Gastrocnemius medialis (tissue), 4 donors: ENCODE measurements at regions of chr16 and their contacts with region 1.

Region 1: DNA sequence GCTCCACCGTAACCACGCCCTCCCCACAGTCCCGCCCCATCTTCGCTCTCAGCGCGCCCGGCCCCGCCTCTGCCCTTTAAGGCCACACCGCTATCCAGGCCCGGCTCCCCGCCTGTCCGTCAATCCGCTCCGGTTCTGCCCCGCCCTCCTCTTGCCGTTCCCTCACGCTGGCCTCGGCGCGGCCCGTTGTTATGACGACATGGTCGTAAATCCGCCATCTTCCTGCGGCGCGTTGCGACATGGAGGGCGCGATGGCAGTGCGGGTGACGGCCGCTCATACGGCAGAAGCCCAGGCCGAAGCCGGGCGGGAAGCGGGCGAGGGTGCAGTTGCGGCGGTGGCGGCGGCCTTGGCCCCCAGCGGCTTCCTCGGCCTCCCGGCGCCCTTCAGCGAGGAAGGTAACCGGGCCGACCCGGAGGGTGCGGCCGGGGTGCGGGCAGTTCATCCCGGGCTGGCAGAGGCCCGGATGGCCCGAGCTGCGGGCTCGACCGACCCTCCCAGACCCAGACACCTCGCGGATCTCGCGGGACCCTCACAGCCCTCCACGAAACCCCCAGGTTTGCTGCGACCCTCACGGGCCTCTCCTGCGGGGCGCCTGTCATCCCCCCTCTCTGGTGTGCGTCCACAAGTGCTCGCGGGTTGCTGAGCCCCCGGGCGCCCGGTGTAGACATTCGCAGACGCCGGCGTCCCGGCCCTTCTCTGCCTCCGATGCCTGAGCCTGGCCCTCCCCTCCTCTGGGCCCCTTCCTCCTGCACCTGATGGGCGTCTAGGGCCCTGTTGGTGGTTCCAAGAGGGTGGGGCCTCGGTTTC is at the start of gene E4F1:
- DNase-seq: peak; percentile 99 to 100
- ATAC-seq: peak; percentile 97
- H3K4me3 ChIP-seq: peak within 1 kb of the TSS; percentile 78 to 98 (median 93)
- H3K27ac ChIP-seq: peak within 1 kb of the TSS; percentile 85 to 96 (median 94)
- H3K4me1 ChIP-seq: peaks cover 11 to 16% of the 10 kb centered on the region in 2 donors
- H3K27me3 ChIP-seq: no peaks in the 10 kb centered on the region
- CTCF ChIP-seq: no peak
- POLR2A ChIP-seq: peak; percentile 97 to 98
- total RNA-seq, gene E4F1: 24.5 to 38.4 (median 27.0) TPM

Region 2: GRCh38 chr16:2190659-2191445 is 32.7 kb before region 1 on chr16:
- in situ Hi-C with region 1: no loop called
- intact Hi-C with region 1: no loop called
- DNase-seq: no peak
- ATAC-seq: no peak
- H3K4me3 ChIP-seq: no peak overlapping the region
- H3K27ac ChIP-seq: no peak overlapping the region
- H3K4me1 ChIP-seq: peaks cover 7 to 9% of the 10 kb centered on the region in 2 donors
- H3K27me3 ChIP-seq: peaks cover 18 to 23% (median 23%) of the 10 kb centered on the region in 3 donors
- CTCF ChIP-seq: no peak
- POLR2A ChIP-seq: no peak

Region 3: GRCh38 chr16:2205104-2205966 is 18.2 kb before region 1 on chr16 and contains the start of gene MLST8:
- in situ Hi-C with region 1: no loop called
- intact Hi-C with region 1: loop called (anchors 1 kb)
- DNase-seq: peak; percentile 70 to 78
- ATAC-seq: peak; percentile 87 to 91
- H3K4me3 ChIP-seq: peak within 1 kb of the TSS; percentile 82 to 94 (median 92)
- H3K27ac ChIP-seq: peak within 1 kb of the TSS; percentile 96 to 100 (median 100)
- H3K4me1 ChIP-seq: peaks cover 19 to 20% of the 10 kb centered on the region in 2 donors
- H3K27me3 ChIP-seq: no peaks in the 10 kb centered on the region
- CTCF ChIP-seq: peak in 1 of 5 experiments; percentile 42
- POLR2A ChIP-seq: peak; percentile 73 to 80
- total RNA-seq, gene MLST8: 40.3 to 77.0 (median 73.5) TPM

Region 4: GRCh38 chr16:2244245-2244691 is 20.7 kb after region 1 on chr16:
- in situ Hi-C with region 1: no loop called
- intact Hi-C with region 1: no loop called
- DNase-seq: no peak
- ATAC-seq: no peak
- H3K4me3 ChIP-seq: no peak overlapping the region
- H3K27ac ChIP-seq: no peak overlapping the region
- H3K4me1 ChIP-seq: no peaks in the 10 kb centered on the region
- H3K27me3 ChIP-seq: no peaks in the 10 kb centered on the region
- CTCF ChIP-seq: no peak
- POLR2A ChIP-seq: no peak